Activated CD4-positive, alpha-beta T cell treated with anti-CD3 and anti-CD28 coated beads for 36 hours (primary cell): ENCODE measurements at regions of chr19 and their contacts with region 1.

Region 1: GRCh38 chr19:2552859-2553258 is 76.9 kb downstream of the GADD45B start:
- DNase-seq: peak; percentile 71
- ATAC-seq: peak; percentile 92
- H3K4me3 Mint-ChIP-seq: peak overlapping the region; percentile 50
- H3K27ac Mint-ChIP-seq: peak overlapping the region; percentile 78
- H3K4me1 Mint-ChIP-seq: peaks cover 13% of the 10 kb centered on the region
- H3K27me3 Mint-ChIP-seq: peaks cover 3% of the 10 kb centered on the region

Region 2: GRCh38 chr19:2032296-2032941 is 520.4 kb before region 1 on chr19:
- CTCF ChIA-PET with region 1: no interaction called
- POLR2A ChIA-PET with region 1: no interaction called
- intact Hi-C with region 1: no loop called
- DNase-seq: peak; percentile 74
- ATAC-seq: peak; percentile 57
- H3K4me3 Mint-ChIP-seq: peak overlapping the region; percentile 70
- H3K27ac Mint-ChIP-seq: peak overlapping the region; percentile 85
- H3K4me1 Mint-ChIP-seq: peaks cover 28% of the 10 kb centered on the region
- H3K27me3 Mint-ChIP-seq: no peaks in the 10 kb centered on the region

Region 3: GRCh38 chr19:2507109-2507508 is 45.8 kb before region 1 on chr19:
- CTCF ChIA-PET with region 1: no interaction called
- POLR2A ChIA-PET with region 1: no interaction called
- intact Hi-C with region 1: loop called in 1 of 2 experiments (anchors 1 kb)
- DNase-seq: peak; percentile 57
- ATAC-seq: peak; percentile 68
- H3K4me3 Mint-ChIP-seq: no peak overlapping the region
- H3K27ac Mint-ChIP-seq: peak overlapping the region; percentile 72
- H3K4me1 Mint-ChIP-seq: peaks cover 26% of the 10 kb centered on the region
- H3K27me3 Mint-ChIP-seq: peaks cover 4% of the 10 kb centered on the region

Region 4: GRCh38 chr19:2602391-2603181 is 49.7 kb after region 1 on chr19:
- CTCF ChIA-PET with region 1: interaction called, 4 read pairs
- POLR2A ChIA-PET with region 1: interaction called, 10 read pairs
- intact Hi-C with region 1: loop called (anchors 1 to 5 kb)
- DNase-seq: no peak
- ATAC-seq: no peak
- H3K4me3 Mint-ChIP-seq: no peak overlapping the region
- H3K27ac Mint-ChIP-seq: no peak overlapping the region
- H3K4me1 Mint-ChIP-seq: peaks cover 24% of the 10 kb centered on the region
- H3K27me3 Mint-ChIP-seq: peaks cover 8% of the 10 kb centered on the region

Region 5: DNA sequence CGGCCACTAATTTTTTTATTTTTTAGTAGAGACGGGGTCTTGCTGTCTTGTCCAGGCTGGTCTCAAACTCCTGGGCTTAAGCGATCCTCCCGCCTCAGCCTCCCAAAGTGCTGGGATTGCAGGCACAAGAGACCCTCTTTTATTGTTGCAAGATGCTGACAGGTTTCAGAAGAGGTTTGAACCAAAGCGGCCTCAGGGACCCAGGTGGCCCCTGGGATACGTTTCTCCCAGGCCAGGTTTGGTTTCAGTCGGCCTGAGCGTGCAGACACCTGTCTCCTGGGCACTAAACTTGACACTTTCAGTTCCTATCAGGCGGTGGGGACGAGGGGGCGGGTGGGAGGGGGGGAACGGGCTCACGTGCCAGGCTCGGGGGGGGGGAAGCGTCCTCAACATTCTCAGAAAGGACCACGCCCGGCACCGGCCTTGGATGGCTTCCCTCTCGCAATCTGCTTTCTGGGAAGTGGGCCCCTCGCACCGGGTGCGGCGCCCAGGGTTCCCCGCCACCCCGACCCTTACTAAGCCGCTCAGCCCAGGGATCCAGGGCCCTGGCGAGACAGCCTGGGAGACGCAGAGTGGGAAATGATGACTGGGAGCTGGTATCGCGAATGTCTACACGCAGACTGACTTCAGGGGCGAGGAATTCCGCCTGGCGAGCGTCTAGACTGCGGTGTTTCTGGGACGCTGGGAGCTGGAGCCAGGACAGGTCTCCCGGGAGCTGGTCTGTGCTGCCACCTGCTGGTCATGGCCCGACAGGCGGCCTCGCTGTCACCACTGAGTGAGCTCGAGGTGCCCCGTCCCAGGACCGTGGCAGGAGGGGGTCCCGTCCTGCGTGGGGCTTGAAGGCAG is 58.0 kb after region 1 on chr19:
- CTCF ChIA-PET with region 1: interaction called, 4 read pairs
- POLR2A ChIA-PET with region 1: no interaction called
- intact Hi-C with region 1: loop called (anchors 1 to 5 kb)
- DNase-seq: peak; percentile 96
- ATAC-seq: peak; percentile 67
- H3K4me3 Mint-ChIP-seq: peak overlapping the region; percentile 71
- H3K27ac Mint-ChIP-seq: peak overlapping the region; percentile 83
- H3K4me1 Mint-ChIP-seq: peaks cover 53% of the 10 kb centered on the region
- H3K27me3 Mint-ChIP-seq: peaks cover 5% of the 10 kb centered on the region

Region 6: DNA sequence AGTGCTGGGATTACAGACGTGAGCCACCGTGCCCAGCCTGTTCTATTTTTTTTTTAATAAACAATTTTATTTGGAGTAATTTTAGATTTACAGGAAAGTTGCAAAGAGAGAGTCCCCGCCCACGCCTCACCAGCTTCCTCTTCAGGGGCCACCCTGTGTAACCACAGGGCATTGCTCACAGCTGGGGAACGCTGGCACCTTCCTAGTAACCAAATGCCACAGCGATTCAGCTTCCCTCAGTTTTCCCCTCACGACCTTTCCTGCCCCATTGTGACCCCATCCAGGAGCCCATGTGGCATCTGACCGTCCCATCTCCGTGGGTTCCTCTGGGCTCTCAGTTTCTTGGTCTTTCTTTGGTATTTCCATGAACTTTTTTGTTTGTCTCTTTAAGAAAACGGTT is 65.8 kb after region 1 on chr19:
- CTCF ChIA-PET with region 1: interaction called, 12 read pairs
- POLR2A ChIA-PET with region 1: no interaction called
- intact Hi-C with region 1: loop called (anchors 1 to 5 kb)
- DNase-seq: peak; percentile 94
- ATAC-seq: no peak
- H3K4me3 Mint-ChIP-seq: peak overlapping the region; percentile 46
- H3K27ac Mint-ChIP-seq: peak overlapping the region; percentile 77
- H3K4me1 Mint-ChIP-seq: peaks cover 64% of the 10 kb centered on the region
- H3K27me3 Mint-ChIP-seq: no peaks in the 10 kb centered on the region

Region 7: DNA sequence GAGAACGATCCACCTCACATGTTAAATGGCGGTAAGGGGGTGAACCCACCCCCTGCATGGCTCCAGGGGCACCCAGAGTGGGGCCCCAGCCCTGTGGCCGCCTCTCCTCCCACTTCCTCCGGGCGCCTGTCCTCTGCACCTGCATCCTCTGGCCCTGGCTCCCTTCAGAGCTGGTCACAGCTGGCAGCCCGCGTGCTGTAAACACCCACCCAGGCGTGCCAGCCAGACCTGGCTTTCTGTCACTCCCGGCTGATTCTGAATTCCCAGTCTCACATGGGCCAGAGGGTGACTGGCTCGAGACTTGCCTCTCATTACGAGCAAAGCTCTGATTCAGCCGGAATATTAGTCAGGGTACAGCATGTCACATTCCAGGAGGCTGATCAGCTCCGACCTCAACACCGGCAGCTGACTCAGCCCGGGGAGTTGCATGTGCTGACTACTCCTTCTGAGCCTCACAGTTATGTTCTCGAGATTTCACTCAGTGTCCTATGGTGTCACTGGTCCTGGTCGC is 74.5 kb after region 1 on chr19:
- CTCF ChIA-PET with region 1: no interaction called
- POLR2A ChIA-PET with region 1: no interaction called
- intact Hi-C with region 1: loop called in 1 of 2 experiments (anchors 5 kb)
- DNase-seq: peak; percentile 84
- ATAC-seq: peak; percentile 97
- H3K4me3 Mint-ChIP-seq: peak overlapping the region; percentile 38
- H3K27ac Mint-ChIP-seq: peak overlapping the region; percentile 81
- H3K4me1 Mint-ChIP-seq: peaks cover 39% of the 10 kb centered on the region
- H3K27me3 Mint-ChIP-seq: no peaks in the 10 kb centered on the region